HepG2 (cell line): ENCODE measurements at regions of chr2 and their contacts with region 1.

Region 1: GRCh38 chr2:112181571-112182290 is 43.5 kb downstream of the FBLN7 start:
- DNase-seq: no peak
- ATAC-seq: no peak; the same call in 1 of the 3 replicates
- H3K4me3 ChIP-seq: no peak overlapping the region
- H3K27ac ChIP-seq: no peak overlapping the region
- H3K4me1 ChIP-seq: no peaks in the 10 kb centered on the region
- H3K27me3 ChIP-seq: no peaks in the 10 kb centered on the region
- CTCF ChIP-seq: no peak
- EP300 ChIP-seq: no peak
- POLR2A ChIP-seq: no peak
- RAD21 ChIP-seq: no peak

Region 2: GRCh38 chr2:110777531-110778311 is 1404.0 kb before region 1 on chr2:
- CTCF ChIA-PET with region 1: no interaction called
- POLR2A ChIA-PET with region 1: no interaction called
- in situ Hi-C with region 1: no loop called
- intact Hi-C with region 1: loop called (anchors 5 kb)
- DNase-seq: no peak
- ATAC-seq: no peak
- H3K4me3 ChIP-seq: no peak overlapping the region
- H3K27ac ChIP-seq: no peak overlapping the region
- H3K4me1 ChIP-seq: peaks cover 9% of the 10 kb centered on the region
- H3K27me3 ChIP-seq: peaks cover 0 to 24% of the 10 kb centered on the region in 2 experiments; a peak in 2 of 5 replicates
- CTCF ChIP-seq: no peak
- EP300 ChIP-seq: no peak
- POLR2A ChIP-seq: no peak
- RAD21 ChIP-seq: no peak